Common myeloid progenitor, CD34-positive (primary cell): ENCODE measurements at regions of chr14 and their contacts with region 1.

Region 1: DNA sequence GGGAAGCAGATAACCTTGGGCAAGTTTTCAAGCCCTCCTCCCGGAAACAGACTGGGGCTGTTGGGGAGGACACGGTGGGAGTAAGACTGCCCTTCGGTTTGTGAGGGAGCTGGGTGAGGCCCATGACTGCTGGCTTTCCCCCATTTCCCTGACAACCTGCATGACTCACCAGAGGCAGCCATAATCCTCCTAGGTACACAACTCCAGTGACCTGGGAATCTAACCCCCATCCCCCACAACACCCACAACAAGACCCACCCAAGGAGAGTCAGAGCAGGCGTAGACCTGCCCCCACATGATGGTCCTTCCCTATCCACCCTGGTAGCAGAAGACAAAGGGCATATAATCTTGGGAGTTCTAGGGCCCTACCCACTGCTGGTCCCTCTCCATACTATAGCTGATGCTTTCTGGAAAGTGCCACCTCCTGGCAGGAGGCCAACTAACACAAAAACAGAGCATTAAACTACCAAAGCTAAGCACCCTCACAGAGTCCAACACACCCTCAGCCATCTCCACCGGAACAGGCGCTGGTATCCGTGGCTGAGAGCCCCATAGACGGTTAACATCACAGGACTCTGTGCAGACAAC is 14.8 kb downstream of the DDX24 start:
- DNase-seq: no peak
- H3K4me3 ChIP-seq: no peak overlapping the region
- H3K27ac ChIP-seq: no peak overlapping the region
- H3K4me1 ChIP-seq: no peaks in the 10 kb centered on the region
- H3K27me3 ChIP-seq: no peaks in the 10 kb centered on the region

Region 2: GRCh38 chr14:94051115-94051514 is 15.1 kb before region 1 on chr14:
- CTCF ChIA-PET with region 1: interaction called, 15 read pairs
- POLR2A ChIA-PET with region 1: no interaction called
- DNase-seq: peak in 1 of 3 donors; percentile 5
- H3K4me3 ChIP-seq: no peak overlapping the region
- H3K27ac ChIP-seq: no peak overlapping the region
- H3K4me1 ChIP-seq: no peaks in the 10 kb centered on the region
- H3K27me3 ChIP-seq: no peaks in the 10 kb centered on the region

Region 3: GRCh38 chr14:94193776-94194175 is 127.6 kb after region 1 on chr14:
- CTCF ChIA-PET with region 1: no interaction called
- POLR2A ChIA-PET with region 1: no interaction called
- DNase-seq: no peak
- H3K4me3 ChIP-seq: no peak overlapping the region
- H3K27ac ChIP-seq: no peak overlapping the region
- H3K4me1 ChIP-seq: no peaks in the 10 kb centered on the region
- H3K27me3 ChIP-seq: peaks cover 0 to 10% (median 0%) of the 10 kb centered on the region in 5 experiments